Activated B cell treated with CpG ODN at 0.5 μM for 24 hours (primary cell): ENCODE measurements at regions of chr16 and their contacts with region 1.

Region 1: GRCh38 chr16:636206-637080 is at the start of gene METTL26:
- DNase-seq: peak; percentile 91
- ATAC-seq: peak; percentile 82
- H3K4me3 Mint-ChIP-seq: peak within 1 kb of the TSS; percentile 95
- H3K27ac Mint-ChIP-seq: peak within 1 kb of the TSS; percentile 97
- H3K4me1 Mint-ChIP-seq: peaks cover 30% of the 10 kb centered on the region
- H3K27me3 Mint-ChIP-seq: no peaks in the 10 kb centered on the region
- CTCF ChIP-seq: no peak
- total RNA-seq, gene METTL26: 48.7 and 49.9 TPM in 2 replicates

Region 2: GRCh38 chr16:569445-570254 is 66.8 kb before region 1 on chr16 and contains the start of gene PIGQ:
- CTCF ChIA-PET with region 1: no interaction called
- POLR2A ChIA-PET with region 1: interaction called, 5 read pairs
- intact Hi-C with region 1: loop called (anchors 1 kb)
- DNase-seq: peak; percentile 71
- ATAC-seq: peak; percentile 76
- H3K4me3 Mint-ChIP-seq: peak within 1 kb of the TSS; percentile 89
- H3K27ac Mint-ChIP-seq: peak within 1 kb of the TSS; percentile 84
- H3K4me1 Mint-ChIP-seq: peaks cover 34% of the 10 kb centered on the region
- H3K27me3 Mint-ChIP-seq: no peaks in the 10 kb centered on the region
- CTCF ChIP-seq: no peak
- total RNA-seq, gene PIGQ: 46.7 and 53.1 TPM in 2 replicates

Region 3: GRCh38 chr16:648781-649589 is 12.5 kb after region 1 on chr16 and contains the start of gene WDR90:
- CTCF ChIA-PET with region 1: interaction called, 3 read pairs
- POLR2A ChIA-PET with region 1: interaction called, 10 read pairs
- intact Hi-C with region 1: loop called (anchors 1 kb)
- DNase-seq: peak; percentile 93
- ATAC-seq: peak; percentile 85
- H3K4me3 Mint-ChIP-seq: peak within 1 kb of the TSS; percentile 84
- H3K27ac Mint-ChIP-seq: peak within 1 kb of the TSS; percentile 85
- H3K4me1 Mint-ChIP-seq: peaks cover 22% of the 10 kb centered on the region
- H3K27me3 Mint-ChIP-seq: no peaks in the 10 kb centered on the region
- CTCF ChIP-seq: no peak
- total RNA-seq, gene WDR90: 24.8 and 33.7 TPM in 2 replicates

Region 4: DNA sequence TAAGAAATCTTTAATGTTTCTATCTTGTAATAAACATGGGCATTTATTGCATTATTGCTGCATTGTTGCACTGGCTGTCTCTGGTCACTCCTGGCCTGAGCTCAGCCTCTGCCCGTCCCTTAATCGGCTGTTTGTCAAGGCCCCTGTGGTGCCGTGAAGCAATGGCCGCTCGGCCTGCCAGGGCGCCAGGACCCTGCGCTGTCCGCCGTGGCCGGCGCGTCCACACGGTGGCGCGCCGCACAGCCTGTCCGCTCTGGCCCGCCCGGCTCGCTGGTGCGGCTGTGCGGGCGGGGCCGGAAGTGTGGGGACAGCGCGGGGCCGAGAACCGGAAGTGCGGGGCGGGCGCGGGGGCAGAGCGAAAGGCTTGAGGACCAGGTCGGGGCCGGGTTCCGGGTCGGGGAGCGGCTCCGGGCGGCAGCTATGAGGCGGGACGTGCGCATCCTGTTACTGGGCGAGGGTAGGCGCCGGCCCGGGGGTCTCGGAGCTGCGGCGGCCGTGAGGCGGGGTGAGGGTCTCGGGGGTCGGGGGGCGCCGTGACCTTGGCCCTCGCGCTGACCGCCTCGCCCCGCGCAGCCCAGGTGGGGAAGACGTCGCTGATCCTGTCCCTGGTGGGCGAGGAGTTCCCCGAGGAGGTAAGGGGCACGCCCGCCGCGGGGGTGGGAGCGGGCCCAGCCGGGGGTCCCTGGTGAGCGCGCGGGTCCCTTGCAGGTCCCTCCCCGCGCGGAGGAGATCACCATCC is 31.5 kb after region 1 on chr16 and contains the start of gene RHOT2:
- CTCF ChIA-PET with region 1: no interaction called
- POLR2A ChIA-PET with region 1: interaction called, 3 read pairs
- intact Hi-C with region 1: loop called (anchors 1 kb)
- DNase-seq: peak; percentile 96
- ATAC-seq: peak; percentile 98
- H3K4me3 Mint-ChIP-seq: peak within 1 kb of the TSS; percentile 80
- H3K27ac Mint-ChIP-seq: peak within 1 kb of the TSS; percentile 80
- H3K4me1 Mint-ChIP-seq: peaks cover 12% of the 10 kb centered on the region
- H3K27me3 Mint-ChIP-seq: no peaks in the 10 kb centered on the region
- CTCF ChIP-seq: peak; percentile 7
- total RNA-seq, gene RHOT2: 141 and 170 TPM in 2 replicates

Region 5: GRCh38 chr16:720990-721764 is 84.7 kb after region 1 on chr16 and contains the start of gene ANTKMT:
- CTCF ChIA-PET with region 1: no interaction called
- POLR2A ChIA-PET with region 1: no interaction called
- intact Hi-C with region 1: no loop called
- DNase-seq: peak; percentile 89
- ATAC-seq: peak; percentile 90
- H3K4me3 Mint-ChIP-seq: peak within 1 kb of the TSS; percentile 80
- H3K27ac Mint-ChIP-seq: peak within 1 kb of the TSS; percentile 73
- H3K4me1 Mint-ChIP-seq: peaks cover 19% of the 10 kb centered on the region
- H3K27me3 Mint-ChIP-seq: peaks cover 3% of the 10 kb centered on the region
- CTCF ChIP-seq: no peak
- total RNA-seq, gene ANTKMT: 58.0 and 67.4 TPM in 2 replicates

Region 6: DNA sequence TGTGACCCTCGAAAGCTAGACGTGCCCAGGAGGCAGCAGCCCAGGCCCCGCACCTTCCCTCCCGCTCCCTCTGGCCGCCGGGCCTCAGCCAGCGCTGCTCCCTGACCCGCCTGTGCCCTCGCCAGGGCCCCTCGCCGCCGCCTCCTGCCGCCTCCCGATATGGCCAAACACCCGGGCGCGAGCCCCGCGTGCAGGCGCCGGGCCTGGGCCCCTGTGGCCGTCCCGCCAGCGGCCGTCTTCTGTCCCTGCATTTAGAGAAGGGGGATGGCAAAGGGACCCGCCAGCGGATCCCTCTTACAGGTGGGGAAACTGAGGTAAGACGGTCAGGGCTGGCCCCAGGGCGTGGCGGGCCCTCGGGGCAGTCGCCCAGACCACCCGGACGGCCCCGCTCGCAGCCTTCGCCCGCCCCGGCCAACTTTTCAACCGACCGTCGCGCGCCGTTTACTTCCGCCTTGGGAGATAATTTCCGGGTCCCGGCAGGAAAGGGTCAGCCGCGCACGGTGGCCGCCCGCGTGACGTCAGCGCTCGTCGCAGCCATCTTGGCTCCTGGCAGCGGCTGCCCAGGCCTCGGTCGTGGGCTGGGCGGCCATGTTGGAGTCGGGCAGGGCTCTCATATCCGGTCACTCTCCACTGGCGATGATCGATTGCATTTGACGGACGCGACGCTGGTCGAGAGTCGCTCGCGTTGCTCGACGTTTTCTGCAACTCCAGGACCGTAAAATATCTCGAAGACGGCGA is 171.1 kb after region 1 on chr16:
- CTCF ChIA-PET with region 1: no interaction called
- POLR2A ChIA-PET with region 1: no interaction called
- intact Hi-C with region 1: loop called (anchors 1 kb)
- DNase-seq: peak; percentile 79
- ATAC-seq: peak; percentile 95
- H3K4me3 Mint-ChIP-seq: peak overlapping the region; percentile 97
- H3K27ac Mint-ChIP-seq: peak overlapping the region; percentile 92
- H3K4me1 Mint-ChIP-seq: peaks cover 11% of the 10 kb centered on the region
- H3K27me3 Mint-ChIP-seq: peaks cover 11% of the 10 kb centered on the region
- CTCF ChIP-seq: no peak